Natural killer cell (primary cell): ENCODE measurements at regions of chr20 and their contacts with region 1.

Region 1: GRCh38 chr20:43955062-43955749 is 40.6 kb downstream of the TOX2 start:
- DNase-seq: peak; percentile 35 to 66
- ATAC-seq: peak; percentile 58 to 71 (median 68)
- H3K4me3 ChIP-seq: no peak overlapping the region
- H3K4me3 Mint-ChIP-seq: peak overlapping the region; percentile 77
- H3K27ac ChIP-seq: no peak overlapping the region
- H3K27ac Mint-ChIP-seq: peak overlapping the region in 1 of 2 donors; percentile 72
- H3K4me1 ChIP-seq: peaks cover 84% of the 10 kb centered on the region
- H3K4me1 Mint-ChIP-seq: peaks cover 86 to 90% of the 10 kb centered on the region in 2 donors
- H3K27me3 ChIP-seq: peaks cover 32% of the 10 kb centered on the region
- H3K27me3 Mint-ChIP-seq: peaks cover 45 to 51% of the 10 kb centered on the region in 2 donors
- CTCF ChIP-seq: no peak

Region 2: GRCh38 chr20:43749734-43750294 is 205.4 kb before region 1 on chr20:
- intact Hi-C with region 1: loop called (anchors 2 kb)
- DNase-seq: peak; percentile 85
- ATAC-seq: peak; percentile 66 to 79 (median 70)
- H3K4me3 ChIP-seq: no peak overlapping the region
- H3K4me3 Mint-ChIP-seq: no peak overlapping the region
- H3K27ac ChIP-seq: no peak overlapping the region
- H3K27ac Mint-ChIP-seq: no peak overlapping the region
- H3K4me1 ChIP-seq: peaks cover 36% of the 10 kb centered on the region
- H3K4me1 Mint-ChIP-seq: peaks cover 30 to 33% of the 10 kb centered on the region in 2 donors
- H3K27me3 ChIP-seq: peaks cover 26% of the 10 kb centered on the region
- H3K27me3 Mint-ChIP-seq: peaks cover 42 to 58% of the 10 kb centered on the region in 2 donors
- CTCF ChIP-seq: peak; percentile 99

Region 3: GRCh38 chr20:43914311-43915210 is 40.6 kb before region 1 on chr20 and contains the start of gene TOX2:
- intact Hi-C with region 1: loop called (anchors 2 kb)
- DNase-seq: peak; percentile 43 to 68
- ATAC-seq: peak; percentile 49 to 69 (median 68)
- H3K4me3 ChIP-seq: peak within 1 kb of the TSS; percentile 36
- H3K4me3 Mint-ChIP-seq: peak within 1 kb of the TSS; percentile 89
- H3K27ac ChIP-seq: no peak within 1 kb of the TSS
- H3K27ac Mint-ChIP-seq: peak within 1 kb of the TSS; percentile 63 to 86
- H3K4me1 ChIP-seq: peaks cover 25% of the 10 kb centered on the region
- H3K4me1 Mint-ChIP-seq: peaks cover 14 to 22% of the 10 kb centered on the region in 2 donors
- H3K27me3 ChIP-seq: peaks cover 25% of the 10 kb centered on the region
- H3K27me3 Mint-ChIP-seq: peaks cover 57 to 72% of the 10 kb centered on the region in 2 donors
- CTCF ChIP-seq: no peak
- total RNA-seq, gene TOX2: 0.93 to 1.8 (median 1.2) TPM

Region 4: GRCh38 chr20:43942661-43943290 is 12.4 kb before region 1 on chr20:
- intact Hi-C with region 1: loop called (anchors 1 kb)
- DNase-seq: peak in 1 of 2 donors; percentile 63
- ATAC-seq: peak; percentile 71 to 82 (median 76)
- H3K4me3 ChIP-seq: no peak overlapping the region
- H3K4me3 Mint-ChIP-seq: peak overlapping the region; percentile 64
- H3K27ac ChIP-seq: no peak overlapping the region
- H3K27ac Mint-ChIP-seq: peak overlapping the region in 1 of 2 donors; percentile 75
- H3K4me1 ChIP-seq: peaks cover 40% of the 10 kb centered on the region
- H3K4me1 Mint-ChIP-seq: peaks cover 45 to 72% of the 10 kb centered on the region in 2 donors
- H3K27me3 ChIP-seq: peaks cover 33% of the 10 kb centered on the region
- H3K27me3 Mint-ChIP-seq: peaks cover 56 to 81% of the 10 kb centered on the region in 2 donors
- CTCF ChIP-seq: no peak

Region 5: GRCh38 chr20:43983359-43983758 is 28.2 kb after region 1 on chr20:
- intact Hi-C with region 1: loop called (anchors 2 kb)
- DNase-seq: peak in 1 of 2 donors; percentile 55
- ATAC-seq: no peak
- H3K4me3 ChIP-seq: no peak overlapping the region
- H3K4me3 Mint-ChIP-seq: no peak overlapping the region
- H3K27ac ChIP-seq: no peak overlapping the region
- H3K27ac Mint-ChIP-seq: no peak overlapping the region
- H3K4me1 ChIP-seq: peaks cover 27% of the 10 kb centered on the region
- H3K4me1 Mint-ChIP-seq: peaks cover 37 to 45% of the 10 kb centered on the region in 2 donors
- H3K27me3 ChIP-seq: peaks cover 36% of the 10 kb centered on the region
- H3K27me3 Mint-ChIP-seq: peaks cover 62 to 68% of the 10 kb centered on the region in 2 donors
- CTCF ChIP-seq: peak; percentile 38

Region 6: DNA sequence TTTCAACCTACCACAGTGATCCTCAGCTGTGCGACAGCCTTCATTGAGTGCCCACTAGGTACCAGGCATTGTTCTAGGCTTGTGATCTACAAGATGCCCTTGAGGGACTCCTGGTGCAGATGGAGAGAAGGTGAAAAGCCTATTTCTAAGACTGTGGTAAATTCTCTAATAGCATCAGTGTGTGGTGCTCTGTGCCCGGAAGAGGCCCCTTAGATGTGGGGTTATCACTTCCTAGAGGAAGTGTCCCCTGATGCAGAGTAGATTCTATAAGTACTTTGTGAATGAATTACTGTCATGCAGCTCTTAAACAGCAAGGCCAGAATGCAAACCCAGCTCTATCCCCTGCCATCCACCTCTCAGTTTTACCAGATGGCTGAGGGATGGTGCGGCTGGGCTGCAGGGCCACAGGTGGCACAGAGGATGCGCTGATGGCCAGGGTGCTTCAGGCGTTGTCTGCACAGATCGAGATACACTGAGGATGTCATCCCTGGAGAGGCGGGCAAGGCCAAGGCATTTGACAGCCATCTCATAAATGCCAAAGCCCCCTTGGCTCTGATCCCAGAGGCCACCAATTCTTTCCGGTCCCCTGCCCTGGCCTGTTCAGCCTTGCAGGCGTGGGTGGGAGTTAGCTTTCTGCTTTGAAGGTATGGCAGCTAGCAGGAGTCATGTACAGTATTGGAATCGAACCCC is 56.2 kb after region 1 on chr20:
- intact Hi-C with region 1: no loop called
- DNase-seq: peak in 1 of 2 donors; percentile 55
- ATAC-seq: peak; percentile 49 to 89 (median 56)
- H3K4me3 ChIP-seq: no peak overlapping the region
- H3K4me3 Mint-ChIP-seq: no peak overlapping the region
- H3K27ac ChIP-seq: no peak overlapping the region
- H3K27ac Mint-ChIP-seq: no peak overlapping the region
- H3K4me1 ChIP-seq: peaks cover 15% of the 10 kb centered on the region
- H3K4me1 Mint-ChIP-seq: peaks cover 19 to 22% of the 10 kb centered on the region in 2 donors
- H3K27me3 ChIP-seq: peaks cover 19% of the 10 kb centered on the region
- H3K27me3 Mint-ChIP-seq: peaks cover 36 to 67% of the 10 kb centered on the region in 2 donors
- CTCF ChIP-seq: no peak

Region 7: GRCh38 chr20:44069203-44070011 is 114.2 kb after region 1 on chr20:
- intact Hi-C with region 1: loop called (anchors 1 kb)
- DNase-seq: peak; percentile 53 to 93
- ATAC-seq: peak; percentile 75 to 80 (median 77)
- H3K4me3 ChIP-seq: peak overlapping the region; percentile 14
- H3K4me3 Mint-ChIP-seq: peak overlapping the region; percentile 86
- H3K27ac ChIP-seq: peak overlapping the region; percentile 84
- H3K27ac Mint-ChIP-seq: peak overlapping the region; percentile 82 to 88
- H3K4me1 ChIP-seq: peaks cover 37% of the 10 kb centered on the region
- H3K4me1 Mint-ChIP-seq: peaks cover 24 to 38% of the 10 kb centered on the region in 2 donors
- H3K27me3 ChIP-seq: peaks cover 3% of the 10 kb centered on the region
- H3K27me3 Mint-ChIP-seq: peaks cover 34 to 36% of the 10 kb centered on the region in 2 donors
- CTCF ChIP-seq: no peak

Region 8: DNA sequence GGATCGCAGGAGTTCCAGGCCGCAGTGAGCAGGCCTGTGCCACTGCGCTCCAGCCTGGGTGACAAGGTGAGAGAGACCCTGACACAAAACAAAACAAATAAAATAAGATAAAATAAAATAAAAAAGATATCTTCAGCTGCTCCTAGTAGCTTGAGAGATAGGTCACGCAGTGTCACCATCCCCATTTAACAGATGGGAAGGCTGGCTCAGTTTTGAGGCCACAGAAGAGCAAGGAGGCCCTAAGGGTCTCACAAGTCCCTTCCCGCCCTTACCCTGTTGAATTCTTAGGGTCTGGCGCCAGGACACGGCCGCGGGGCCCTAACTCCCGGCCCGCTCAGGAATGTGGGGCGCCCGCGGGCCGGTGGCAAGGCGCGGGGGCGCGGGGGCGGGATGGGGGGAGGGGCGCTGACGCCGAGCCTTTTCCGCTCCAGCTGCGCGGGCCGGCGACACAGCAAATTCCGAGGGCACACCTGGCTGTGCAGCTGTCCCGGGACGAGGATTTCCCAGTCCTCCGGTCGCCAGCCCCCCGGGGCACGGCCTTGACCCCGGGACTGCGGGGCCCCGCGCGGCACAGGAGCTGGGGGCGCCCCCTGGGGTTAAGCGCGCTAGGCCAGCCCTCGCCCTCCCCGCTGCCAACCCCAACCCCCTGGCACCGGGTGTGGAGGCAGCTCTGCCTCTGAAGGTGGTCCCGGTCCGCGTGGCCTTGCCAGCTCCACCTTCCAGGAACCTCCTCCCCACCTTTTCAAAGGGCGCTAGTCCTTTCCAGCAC is 371.4 kb after region 1 on chr20:
- intact Hi-C with region 1: no loop called
- DNase-seq: peak in 1 of 2 donors; percentile 33
- ATAC-seq: no peak
- H3K4me3 ChIP-seq: no peak overlapping the region
- H3K4me3 Mint-ChIP-seq: no peak overlapping the region
- H3K27ac ChIP-seq: no peak overlapping the region
- H3K27ac Mint-ChIP-seq: no peak overlapping the region
- H3K4me1 ChIP-seq: no peaks in the 10 kb centered on the region
- H3K4me1 Mint-ChIP-seq: no peaks in the 10 kb centered on the region
- H3K27me3 ChIP-seq: peaks cover 5% of the 10 kb centered on the region
- H3K27me3 Mint-ChIP-seq: peaks cover 16 to 37% of the 10 kb centered on the region in 2 donors
- CTCF ChIP-seq: no peak

Region 9: GRCh38 chr20:45311589-45312211 is 1356.5 kb after region 1 on chr20:
- intact Hi-C with region 1: no loop called
- DNase-seq: peak; percentile 32 to 74
- ATAC-seq: peak; percentile 59 to 75 (median 60)
- H3K4me3 ChIP-seq: no peak overlapping the region
- H3K4me3 Mint-ChIP-seq: no peak overlapping the region
- H3K27ac ChIP-seq: no peak overlapping the region
- H3K27ac Mint-ChIP-seq: no peak overlapping the region
- H3K4me1 ChIP-seq: peaks cover 3% of the 10 kb centered on the region
- H3K4me1 Mint-ChIP-seq: peaks cover 0 to 6% of the 10 kb centered on the region in 2 donors
- H3K27me3 ChIP-seq: peaks cover 2% of the 10 kb centered on the region
- H3K27me3 Mint-ChIP-seq: peaks cover 45 to 59% of the 10 kb centered on the region in 2 donors
- CTCF ChIP-seq: peak; percentile 57